Activated naive CD4-positive, alpha-beta T cell treated with anti-CD3 and anti-CD28 coated beads for 36 hours (primary cell): ENCODE measurements at regions of chr4 and their contacts with region 1.

Region 1: GRCh38 chr4:163484906-163485305 is 9.6 kb upstream of the TMA16 start:
- DNase-seq: peak; percentile 67
- H3K4me3 Mint-ChIP-seq: no peak overlapping the region
- H3K27ac Mint-ChIP-seq: no peak overlapping the region
- H3K4me1 Mint-ChIP-seq: no peaks in the 10 kb centered on the region
- H3K27me3 Mint-ChIP-seq: peaks cover 13% of the 10 kb centered on the region

Region 2: DNA sequence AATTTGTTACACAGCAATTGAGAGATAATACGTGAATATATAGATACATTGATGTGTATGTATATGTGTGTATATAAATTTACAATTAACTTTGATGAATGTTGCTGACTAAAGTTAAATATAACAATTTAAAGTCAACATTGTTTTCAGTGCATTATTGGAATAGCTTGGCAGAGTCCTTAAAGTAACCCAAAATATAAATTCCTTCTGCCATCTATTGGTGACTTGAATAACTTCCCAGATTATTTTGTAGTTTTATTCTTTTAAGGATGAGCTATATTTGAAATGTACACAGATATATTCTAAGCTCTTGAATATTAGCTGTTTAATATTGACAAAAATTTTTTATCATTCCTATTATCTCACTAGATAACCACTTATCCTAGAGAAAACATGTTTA is 1023.0 kb before region 1 on chr4:
- CTCF ChIA-PET with region 1: no interaction called
- intact Hi-C with region 1: no loop called
- DNase-seq: no peak
- H3K4me3 Mint-ChIP-seq: no peak overlapping the region
- H3K27ac Mint-ChIP-seq: no peak overlapping the region
- H3K4me1 Mint-ChIP-seq: no peaks in the 10 kb centered on the region
- H3K27me3 Mint-ChIP-seq: no peaks in the 10 kb centered on the region

Region 3: DNA sequence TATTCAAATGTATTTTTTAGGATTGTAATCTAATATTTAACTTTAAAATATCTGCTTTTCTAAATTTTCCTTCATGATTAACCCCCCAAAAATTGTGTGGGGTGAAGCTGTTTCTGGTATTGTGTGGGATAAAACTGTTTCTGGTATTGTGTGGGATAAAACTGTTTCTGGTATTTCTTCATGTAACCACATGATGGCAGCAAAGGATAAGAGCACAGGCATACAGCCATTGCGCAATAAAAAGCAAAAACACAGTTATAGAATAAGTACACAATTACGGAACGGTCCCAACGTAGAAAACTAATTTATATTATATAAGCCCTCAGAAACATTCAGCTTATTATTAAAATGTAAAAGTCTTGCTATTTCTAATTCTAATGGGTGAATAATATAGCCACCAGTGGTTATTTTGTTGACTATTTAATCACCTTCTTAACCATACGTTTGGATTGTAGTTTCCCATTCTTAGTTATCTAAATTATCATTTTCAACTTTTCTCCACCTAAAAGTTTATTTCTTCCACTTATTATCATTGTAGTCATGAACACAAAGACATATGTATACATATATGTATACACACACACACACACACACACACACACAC is 987.2 kb before region 1 on chr4:
- CTCF ChIA-PET with region 1: no interaction called
- intact Hi-C with region 1: loop called (anchors 1 kb)
- DNase-seq: peak; percentile 12
- H3K4me3 Mint-ChIP-seq: no peak overlapping the region
- H3K27ac Mint-ChIP-seq: no peak overlapping the region
- H3K4me1 Mint-ChIP-seq: no peaks in the 10 kb centered on the region
- H3K27me3 Mint-ChIP-seq: peaks cover 8% of the 10 kb centered on the region

Region 4: GRCh38 chr4:163107754-163108153 is 377.2 kb before region 1 on chr4:
- CTCF ChIA-PET with region 1: no interaction called
- intact Hi-C with region 1: loop called (anchors 10 kb)
- DNase-seq: no peak
- H3K4me3 Mint-ChIP-seq: no peak overlapping the region
- H3K27ac Mint-ChIP-seq: no peak overlapping the region
- H3K4me1 Mint-ChIP-seq: peaks cover 10% of the 10 kb centered on the region
- H3K27me3 Mint-ChIP-seq: no peaks in the 10 kb centered on the region

Region 5: DNA sequence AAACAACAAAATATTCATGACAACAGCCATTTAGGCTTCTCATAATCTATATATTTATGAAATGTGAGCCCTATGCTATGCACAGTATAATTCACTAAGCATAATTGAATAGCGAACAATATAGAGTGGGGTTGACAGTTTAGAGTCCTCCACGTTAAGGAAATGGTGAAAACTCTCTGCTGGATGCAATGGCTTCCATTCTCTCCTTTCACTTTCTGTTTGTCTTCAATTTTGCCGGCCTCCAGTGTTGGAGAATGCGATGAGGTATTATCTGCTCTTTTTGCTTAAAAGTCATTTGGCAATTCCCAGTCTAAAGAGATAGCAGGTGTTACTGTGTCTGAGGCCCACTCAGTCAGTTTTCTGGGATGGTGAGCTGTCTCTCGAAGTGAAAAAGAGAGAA is 89.1 kb before region 1 on chr4:
- CTCF ChIA-PET with region 1: no interaction called
- intact Hi-C with region 1: no loop called
- DNase-seq: no peak
- H3K4me3 Mint-ChIP-seq: no peak overlapping the region
- H3K27ac Mint-ChIP-seq: no peak overlapping the region
- H3K4me1 Mint-ChIP-seq: peaks cover 2% of the 10 kb centered on the region
- H3K27me3 Mint-ChIP-seq: peaks cover 15% of the 10 kb centered on the region

Region 6: DNA sequence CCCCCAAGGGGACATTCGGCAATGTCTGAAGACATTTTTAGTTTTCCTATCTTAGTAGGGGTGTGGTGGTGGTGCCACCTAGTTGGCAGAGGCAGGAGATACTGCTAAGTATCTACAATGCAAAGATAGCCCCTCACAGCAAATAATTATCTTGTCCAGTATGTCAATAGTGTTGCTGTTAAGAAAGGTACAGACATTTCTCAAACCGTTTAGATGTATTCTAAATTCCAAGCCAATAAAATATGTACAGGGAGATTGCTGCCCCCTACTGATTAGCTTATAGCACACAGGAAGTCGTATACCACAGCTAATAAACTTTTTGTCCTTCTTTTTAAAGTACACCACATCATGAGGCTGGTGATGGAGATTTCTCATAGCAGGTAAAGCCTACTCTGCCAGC is 270.1 kb after region 1 on chr4:
- CTCF ChIA-PET with region 1: no interaction called
- intact Hi-C with region 1: loop called (anchors 2 kb)
- DNase-seq: no peak
- H3K4me3 Mint-ChIP-seq: no peak overlapping the region
- H3K27ac Mint-ChIP-seq: no peak overlapping the region
- H3K4me1 Mint-ChIP-seq: peaks cover 2% of the 10 kb centered on the region
- H3K27me3 Mint-ChIP-seq: no peaks in the 10 kb centered on the region

Region 7: GRCh38 chr4:164012396-164013027 is 527.6 kb after region 1 on chr4:
- CTCF ChIA-PET with region 1: no interaction called
- intact Hi-C with region 1: loop called (anchors 5 kb)
- DNase-seq: peak; percentile 52
- H3K4me3 Mint-ChIP-seq: no peak overlapping the region
- H3K27ac Mint-ChIP-seq: no peak overlapping the region
- H3K4me1 Mint-ChIP-seq: peaks cover 5% of the 10 kb centered on the region
- H3K27me3 Mint-ChIP-seq: no peaks in the 10 kb centered on the region

Region 8: DNA sequence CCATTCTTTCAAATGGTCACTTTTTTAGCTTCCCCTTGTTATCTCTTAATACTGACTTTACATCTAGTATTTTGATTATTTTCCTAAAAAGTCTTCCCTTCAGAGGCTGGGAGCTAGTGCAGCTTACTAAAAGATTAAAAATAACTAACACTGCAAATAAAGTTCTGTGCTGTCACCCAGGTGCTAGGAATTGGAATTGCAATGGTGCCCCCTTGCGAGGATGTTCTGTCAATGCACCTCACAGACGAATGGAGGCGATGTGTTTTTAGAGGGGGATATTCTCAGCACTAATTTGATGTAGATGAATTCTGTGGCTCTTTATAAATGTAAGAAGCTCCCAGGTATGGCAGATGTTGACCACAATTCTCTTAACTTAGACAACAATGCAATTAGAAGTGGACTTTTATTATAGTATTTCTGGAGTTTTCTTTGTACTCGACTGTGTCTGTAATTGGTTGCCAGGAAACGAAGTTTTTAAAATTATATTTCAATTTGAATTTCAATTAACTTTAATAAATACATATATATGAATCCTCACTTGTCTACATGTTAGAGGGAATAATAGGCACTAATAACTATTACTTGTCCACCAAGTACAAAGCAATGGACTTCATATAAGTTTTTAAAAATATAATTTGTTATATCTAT is 1247.0 kb after region 1 on chr4:
- CTCF ChIA-PET with region 1: no interaction called
- intact Hi-C with region 1: loop called (anchors 2 kb)
- DNase-seq: peak; percentile 72
- H3K4me3 Mint-ChIP-seq: no peak overlapping the region
- H3K27ac Mint-ChIP-seq: no peak overlapping the region
- H3K4me1 Mint-ChIP-seq: peaks cover 6% of the 10 kb centered on the region
- H3K27me3 Mint-ChIP-seq: peaks cover 9% of the 10 kb centered on the region

Region 9: DNA sequence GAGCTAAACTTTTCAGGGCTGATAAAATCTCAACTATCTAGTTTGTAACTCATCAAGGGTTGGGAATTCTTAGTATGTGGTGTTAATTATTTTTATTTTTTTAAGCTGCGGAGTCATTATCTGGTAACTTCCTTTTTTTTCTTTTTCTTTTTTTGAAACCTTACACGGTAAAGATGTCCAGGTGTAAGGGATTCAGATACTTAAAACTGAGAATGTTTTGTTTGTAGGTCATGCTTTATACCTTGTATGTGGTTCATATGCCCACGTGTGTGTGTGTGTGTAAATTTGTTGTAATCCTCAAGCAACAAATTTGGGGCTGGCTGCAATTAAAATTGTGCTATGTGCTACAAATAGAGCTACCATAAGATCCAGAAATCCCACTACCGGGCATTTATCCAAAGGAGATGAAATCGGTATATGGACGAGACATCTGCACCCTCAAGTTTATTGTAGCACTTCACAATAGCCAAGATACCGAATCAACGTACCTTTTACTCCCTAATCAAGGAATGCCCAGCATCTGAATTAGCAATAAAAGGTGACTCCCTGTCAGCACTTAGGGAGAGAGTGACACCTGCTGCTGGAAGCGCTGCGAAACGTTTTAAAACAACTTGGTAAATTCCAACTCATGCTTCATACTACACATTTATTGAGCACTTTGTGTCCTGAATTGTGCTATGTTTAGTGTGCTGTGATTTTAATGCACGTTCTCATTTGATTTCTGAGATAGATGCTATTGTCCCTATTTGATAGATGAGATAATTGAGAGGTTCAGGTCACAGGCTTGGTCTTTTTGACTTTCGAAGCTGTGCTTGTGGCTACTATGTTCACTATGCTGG is 1858.7 kb after region 1 on chr4:
- CTCF ChIA-PET with region 1: no interaction called
- intact Hi-C with region 1: no loop called
- DNase-seq: peak; percentile 50
- H3K4me3 Mint-ChIP-seq: no peak overlapping the region
- H3K27ac Mint-ChIP-seq: peak overlapping the region; percentile 19
- H3K4me1 Mint-ChIP-seq: no peaks in the 10 kb centered on the region
- H3K27me3 Mint-ChIP-seq: no peaks in the 10 kb centered on the region